Sigmoid colon (tissue), 7 donors: ENCODE measurements at regions of chr18 and their contacts with region 1.

Region 1: GRCh38 chr18:34661464-34662111 is 48.5 kb upstream of the DTNA start:
- DNase-seq: no peak
- H3K4me3 ChIP-seq: no peak overlapping the region
- H3K27ac ChIP-seq: peak overlapping the region in 3 of 4 donors; percentile 75 to 82 (median 82)
- H3K4me1 ChIP-seq: peaks cover 0 to 40% (median 27%) of the 10 kb centered on the region in 4 donors
- H3K27me3 ChIP-seq: no peaks in the 10 kb centered on the region
- CTCF ChIP-seq: peak in 3 of 4 experiments; percentile 65 to 83 (median 77)
- EP300 ChIP-seq: no peak
- POLR2A ChIP-seq: no peak

Region 2: GRCh38 chr18:34493099-34493544 is 168.5 kb before region 1 on chr18:
- intact Hi-C with region 1: loop called (anchors 5 kb)
- DNase-seq: peak; percentile 84
- H3K4me3 ChIP-seq: peak overlapping the region; percentile 43 to 73 (median 60)
- H3K27ac ChIP-seq: peak overlapping the region; percentile 79 to 85 (median 81)
- H3K4me1 ChIP-seq: peaks cover 0 to 12% (median 2%) of the 10 kb centered on the region in 4 donors
- H3K27me3 ChIP-seq: no peaks in the 10 kb centered on the region
- CTCF ChIP-seq: no peak
- EP300 ChIP-seq: peak in 1 of 4 donors; percentile 34
- POLR2A ChIP-seq: no peak

Region 3: GRCh38 chr18:34543945-34544344 is 117.6 kb before region 1 on chr18:
- intact Hi-C with region 1: no loop called
- DNase-seq: no peak
- H3K4me3 ChIP-seq: no peak overlapping the region
- H3K27ac ChIP-seq: no peak overlapping the region
- H3K4me1 ChIP-seq: no peaks in the 10 kb centered on the region
- H3K27me3 ChIP-seq: no peaks in the 10 kb centered on the region
- CTCF ChIP-seq: no peak
- EP300 ChIP-seq: no peak
- POLR2A ChIP-seq: no peak

Region 4: GRCh38 chr18:34567857-34568256 is 93.7 kb before region 1 on chr18:
- intact Hi-C with region 1: no loop called
- DNase-seq: no peak
- H3K4me3 ChIP-seq: no peak overlapping the region
- H3K27ac ChIP-seq: no peak overlapping the region
- H3K4me1 ChIP-seq: peaks cover 0 to 4% (median 0%) of the 10 kb centered on the region in 4 donors
- H3K27me3 ChIP-seq: no peaks in the 10 kb centered on the region
- CTCF ChIP-seq: no peak
- EP300 ChIP-seq: no peak
- POLR2A ChIP-seq: no peak

Region 5: GRCh38 chr18:34707670-34708069 is 46.1 kb after region 1 on chr18:
- intact Hi-C with region 1: loop called (anchors 5 kb)
- DNase-seq: peak; percentile 81
- H3K4me3 ChIP-seq: no peak overlapping the region
- H3K27ac ChIP-seq: peak overlapping the region; percentile 74 to 88 (median 79)
- H3K4me1 ChIP-seq: peaks cover 0 to 58% (median 49%) of the 10 kb centered on the region in 4 donors
- H3K27me3 ChIP-seq: no peaks in the 10 kb centered on the region
- CTCF ChIP-seq: no peak
- EP300 ChIP-seq: no peak
- POLR2A ChIP-seq: no peak

Region 6: DNA sequence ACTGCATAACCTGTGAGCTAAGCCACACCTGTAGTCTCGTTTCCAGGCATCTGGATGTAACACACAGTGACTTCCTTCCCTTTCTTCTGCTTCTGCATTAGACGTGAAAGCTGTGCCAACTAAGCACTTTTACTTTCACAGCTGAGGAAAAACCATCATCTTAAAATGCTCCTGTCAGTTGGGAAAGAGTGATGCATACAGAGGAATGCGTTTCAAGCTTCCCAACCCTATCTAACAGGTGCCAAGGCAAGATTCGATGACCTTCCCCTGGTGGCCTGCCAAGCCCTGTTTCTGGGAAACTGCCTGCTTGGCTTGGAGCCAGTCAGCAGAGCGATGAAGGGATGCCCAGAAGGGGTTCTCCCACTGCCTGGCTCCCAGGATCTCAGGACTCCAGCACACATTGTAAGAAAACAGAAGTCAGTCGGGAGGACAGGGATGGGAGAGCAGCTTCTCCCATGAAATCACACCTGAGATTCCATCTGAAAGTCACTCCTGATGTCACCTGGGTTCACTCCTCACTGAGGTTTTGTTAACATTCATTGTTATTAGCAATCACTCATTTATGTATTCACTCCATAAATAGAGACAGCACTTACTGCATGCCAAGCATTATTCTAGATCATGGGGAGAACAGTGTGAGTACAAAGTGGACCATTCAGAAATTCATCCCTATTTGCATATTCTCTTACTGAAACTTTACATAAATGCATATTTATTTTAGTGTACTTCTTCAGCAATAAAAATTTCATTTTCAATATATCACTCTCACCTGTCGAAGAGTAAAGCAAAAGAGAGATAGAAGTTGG is 112.6 kb after region 1 on chr18:
- intact Hi-C with region 1: loop called (anchors 5 kb)
- DNase-seq: peak; percentile 70
- H3K4me3 ChIP-seq: peak overlapping the region in 2 of 4 donors; percentile 1 to 12
- H3K27ac ChIP-seq: peak overlapping the region; percentile 62 to 76 (median 68)
- H3K4me1 ChIP-seq: peaks cover 3 to 30% (median 25%) of the 10 kb centered on the region in 4 donors
- H3K27me3 ChIP-seq: no peaks in the 10 kb centered on the region
- CTCF ChIP-seq: no peak
- EP300 ChIP-seq: no peak
- POLR2A ChIP-seq: no peak

Region 7: GRCh38 chr18:34787931-34788532 is 126.4 kb after region 1 on chr18:
- intact Hi-C with region 1: loop called (anchors 2 kb)
- DNase-seq: no peak
- H3K4me3 ChIP-seq: no peak overlapping the region
- H3K27ac ChIP-seq: no peak overlapping the region
- H3K4me1 ChIP-seq: peaks cover 0 to 9% (median 2%) of the 10 kb centered on the region in 4 donors
- H3K27me3 ChIP-seq: no peaks in the 10 kb centered on the region
- CTCF ChIP-seq: peak; percentile 36 to 71 (median 66)
- EP300 ChIP-seq: no peak
- POLR2A ChIP-seq: no peak